ENCODE measurements at regions of chr2 and their contacts with region 1.

Region 1: GRCh38 chr2:178112202-178113152 is at the start of gene RBM45:
- DNase-seq: peak; percentile 62
- H3K4me3 ChIP-seq: peak within 1 kb of the TSS; percentile 65
- H3K27me3 ChIP-seq: no peaks in the 10 kb centered on the region
- CTCF ChIP-seq: peak; percentile 99
- polyA plus RNA-seq, gene RBM45: 5.4 and 9.6 TPM in 2 replicates

Region 2: DNA sequence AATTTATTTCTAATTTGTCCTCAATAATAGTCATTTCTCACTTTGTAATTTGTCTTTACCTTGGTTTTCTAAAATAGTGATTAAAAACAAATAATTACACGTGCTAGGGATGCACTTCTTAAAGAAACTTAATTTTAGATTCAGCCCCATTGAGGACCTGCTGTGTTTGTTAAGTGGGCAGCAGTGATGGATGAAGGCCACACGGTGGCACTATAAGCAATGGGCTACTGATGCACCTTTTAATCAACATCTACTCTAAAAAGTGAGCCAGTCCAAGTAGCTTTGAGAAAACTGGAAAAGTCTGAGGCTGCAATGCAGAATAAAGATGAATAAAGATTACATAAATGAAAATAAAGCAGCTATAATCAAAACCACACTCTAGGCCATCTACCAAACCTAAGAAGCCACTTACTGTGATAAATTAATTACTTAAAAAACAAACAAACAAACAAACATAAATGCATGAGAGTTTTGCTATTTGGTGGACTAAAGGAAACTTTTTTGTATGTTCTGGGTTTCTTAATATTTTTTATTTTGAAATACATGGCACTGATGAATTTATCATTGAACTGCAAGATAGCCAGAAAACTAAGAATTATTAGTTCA is 129.2 kb before region 1 on chr2:
- CTCF ChIA-PET with region 1: interaction called, 40 read pairs
- POLR2A ChIA-PET with region 1: no interaction called
- DNase-seq: no peak
- H3K4me3 ChIP-seq: no peak overlapping the region
- H3K27me3 ChIP-seq: no peaks in the 10 kb centered on the region
- CTCF ChIP-seq: peak; percentile 93

Region 3: GRCh38 chr2:178057179-178057680 is 55.2 kb before region 1 on chr2:
- CTCF ChIA-PET with region 1: no interaction called
- POLR2A ChIA-PET with region 1: no interaction called
- DNase-seq: no peak
- H3K4me3 ChIP-seq: no peak overlapping the region
- H3K27me3 ChIP-seq: no peaks in the 10 kb centered on the region
- CTCF ChIP-seq: no peak

Region 4: GRCh38 chr2:178101321-178102079 is 11.0 kb before region 1 on chr2:
- CTCF ChIA-PET with region 1: interaction called, 12 read pairs
- POLR2A ChIA-PET with region 1: no interaction called
- DNase-seq: no peak
- H3K4me3 ChIP-seq: no peak overlapping the region
- H3K27me3 ChIP-seq: no peaks in the 10 kb centered on the region
- CTCF ChIP-seq: no peak